ENCODE measurements at regions of chr6 and their contacts with region 1.

Region 1: DNA sequence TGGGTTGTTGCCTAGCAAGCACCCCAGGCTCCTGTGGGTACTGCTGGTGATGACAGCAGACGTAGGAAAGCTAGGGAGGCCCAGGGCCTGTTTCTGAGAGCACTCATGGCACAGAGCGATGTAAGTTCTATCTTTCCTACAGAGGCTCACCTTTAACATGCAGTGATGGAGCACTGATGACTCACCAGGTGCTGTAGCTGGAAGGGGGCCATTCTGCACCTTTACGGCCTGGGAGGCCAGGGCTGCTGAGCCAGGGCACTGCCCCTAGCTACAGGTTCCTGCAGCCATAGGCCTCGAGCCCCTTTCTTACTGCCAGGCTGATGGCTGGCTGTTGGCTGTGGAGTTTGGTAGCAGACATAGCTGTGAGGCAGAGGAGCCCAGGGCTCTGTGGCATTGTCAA is 31.1 kb upstream of the GPR6 start:
- DNase-seq: no peak
- ATAC-seq: no peak
- H3K4me3 ChIP-seq: no peak overlapping the region
- H3K27ac ChIP-seq: no peak overlapping the region
- H3K4me1 ChIP-seq: no peaks in the 10 kb centered on the region
- H3K27me3 ChIP-seq: peaks cover 4% of the 10 kb centered on the region
- CTCF ChIP-seq: no peak
- POLR2A ChIP-seq: no peak
- RAD21 ChIP-seq: no peak

Region 2: DNA sequence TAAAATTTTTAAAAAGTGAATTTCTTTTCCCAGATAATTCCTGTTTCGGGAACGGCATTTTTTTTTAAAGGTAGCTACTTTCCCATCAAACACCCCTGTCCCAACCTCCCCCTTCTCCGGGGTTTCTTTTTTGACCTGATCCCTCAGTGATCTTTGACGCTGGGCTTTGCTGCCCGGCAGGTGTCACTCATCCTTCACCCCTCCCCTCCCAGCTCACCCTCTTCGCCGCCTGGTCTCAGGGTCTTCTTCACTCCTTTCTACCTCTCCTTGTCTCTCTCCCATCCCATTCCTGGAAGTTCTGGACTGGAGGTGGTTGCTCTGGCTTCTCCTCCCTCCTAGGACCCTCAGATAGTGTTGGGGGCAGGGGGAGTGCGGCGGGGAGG is 30.8 kb after region 1 on chr6:
- CTCF ChIA-PET with region 1: no interaction called
- POLR2A ChIA-PET with region 1: interaction called, 14 read pairs
- dilution Hi-C with region 1: no loop called
- in situ Hi-C with region 1: no loop called
- intact Hi-C with region 1: no loop called
- DNase-seq: no peak
- ATAC-seq: no peak
- H3K4me3 ChIP-seq: no peak overlapping the region
- H3K27ac ChIP-seq: no peak overlapping the region
- H3K4me1 ChIP-seq: no peaks in the 10 kb centered on the region
- H3K27me3 ChIP-seq: peaks cover 4% of the 10 kb centered on the region; the same call in 1 of the 2 replicates
- CTCF ChIP-seq: no peak
- POLR2A ChIP-seq: no peak
- RAD21 ChIP-seq: no peak